K562 (cell line): ENCODE measurements at regions of chr1 and their contacts with region 1.

Region 1: DNA sequence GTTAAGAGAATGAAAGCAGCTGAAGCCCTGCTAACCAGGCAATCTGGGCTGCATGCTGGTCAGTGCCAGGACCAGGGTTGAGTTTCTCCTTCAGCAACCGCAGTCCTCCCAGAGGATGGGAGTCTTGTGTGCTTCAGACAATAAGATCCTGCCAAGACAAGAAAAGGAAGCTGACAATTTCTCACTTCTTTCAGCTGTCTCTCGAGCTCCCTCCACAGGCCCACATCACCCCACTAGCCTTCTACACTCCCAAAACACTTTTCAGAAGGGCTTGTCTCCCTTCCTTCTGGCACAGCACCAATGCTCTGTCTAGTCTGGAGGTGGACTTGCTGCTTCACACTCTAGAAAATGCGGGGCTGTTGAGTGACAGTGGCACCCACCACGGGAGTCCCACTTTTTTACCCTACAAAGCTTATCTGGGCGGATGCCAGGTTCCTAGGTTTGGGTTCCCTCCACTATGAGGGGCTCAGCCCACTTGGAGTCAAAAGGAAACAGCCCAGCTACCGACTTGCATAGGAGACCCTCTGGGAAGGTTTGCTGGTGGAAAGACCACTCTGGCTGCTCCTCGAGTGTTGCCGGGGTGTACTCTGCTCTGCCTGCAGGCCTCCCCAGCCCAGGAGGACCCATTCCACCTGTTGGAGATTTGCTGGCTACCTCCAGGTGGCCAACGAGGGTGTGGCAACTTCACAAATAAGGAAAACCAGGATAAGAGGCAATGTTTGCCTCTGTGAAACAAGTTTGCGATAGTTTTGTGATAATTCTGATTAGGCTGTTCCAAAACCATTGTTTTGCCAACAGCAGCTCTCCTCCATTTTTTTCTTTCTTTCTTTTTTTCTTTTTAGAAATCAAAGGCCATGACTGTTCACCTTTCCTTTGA is 68.9 kb downstream of the TENT5C start:
- DNase-seq: peak; percentile 55 to 81 (median 69)
- ATAC-seq: peak; percentile 83
- H3K4me3 ChIP-seq: no peak overlapping the region
- H3K27ac ChIP-seq: no peak overlapping the region
- H3K4me1 ChIP-seq: peaks cover 10 to 18% of the 10 kb centered on the region in 2 experiments
- H3K27me3 ChIP-seq: no peaks in the 10 kb centered on the region
- CTCF ChIP-seq: peak; percentile 81 to 93 (median 85)
- EP300 ChIP-seq: no peak
- POLR2A ChIP-seq: no peak
- RAD21 ChIP-seq: peak; percentile 88 to 95

Region 2: DNA sequence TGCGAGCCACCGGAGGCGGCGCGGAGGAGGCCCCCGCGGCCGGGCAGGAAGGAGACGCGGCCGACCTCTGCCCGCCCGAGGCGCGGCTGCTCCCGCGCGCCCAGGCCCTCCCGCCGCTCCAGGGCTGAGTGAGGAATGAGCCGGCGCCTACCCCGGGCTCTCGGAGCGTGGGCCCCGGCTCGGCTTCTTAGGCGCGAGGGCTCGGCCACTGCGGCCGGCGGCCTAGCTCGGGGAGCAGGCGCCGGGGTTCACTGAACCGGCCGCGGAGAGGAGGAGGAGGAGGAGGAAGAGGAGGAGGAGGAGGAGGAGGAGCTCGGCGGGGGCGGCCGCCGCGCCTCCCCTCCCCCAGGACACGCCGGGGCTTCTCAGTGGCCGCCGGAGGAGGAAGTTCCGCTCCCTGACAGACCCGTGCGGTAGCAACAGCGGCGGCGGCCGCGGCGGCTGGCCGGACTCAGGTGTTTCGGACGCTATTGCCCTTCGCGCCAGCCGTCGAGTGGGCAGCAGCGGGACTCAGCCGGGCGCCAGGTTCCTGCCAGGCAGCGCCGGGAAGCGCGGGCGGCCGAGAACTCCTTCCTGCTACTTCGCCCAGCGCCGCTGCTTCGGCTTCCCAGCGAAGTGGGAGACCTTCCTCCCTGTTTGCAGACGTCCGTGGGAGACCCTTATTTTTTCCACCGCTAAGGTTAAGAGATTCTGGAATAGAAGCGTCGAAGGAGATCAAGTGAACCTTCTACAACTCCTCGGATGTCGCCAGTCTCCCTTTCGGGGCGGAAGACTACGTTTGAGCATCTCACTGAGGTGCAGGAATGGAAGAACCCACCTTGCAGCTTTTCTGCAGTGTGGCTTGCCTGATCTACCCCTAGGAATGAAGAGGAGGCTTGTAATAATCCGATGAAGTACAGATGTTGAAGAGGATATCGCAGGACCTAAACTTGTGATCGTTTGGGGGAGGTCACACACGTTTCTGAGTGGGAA is 307.4 kb before region 1 on chr1 and contains the start of gene MAN1A2:
- CTCF ChIA-PET with region 1: no interaction called
- POLR2A ChIA-PET with region 1: no interaction called
- in situ Hi-C with region 1: no loop called
- intact Hi-C with region 1: loop called (anchors 10 kb)
- DNase-seq: peak; percentile 82 to 93 (median 86)
- ATAC-seq: peak; percentile 77
- H3K4me3 ChIP-seq: peak within 1 kb of the TSS; percentile 75
- H3K27ac ChIP-seq: peak within 1 kb of the TSS; percentile 94
- H3K4me1 ChIP-seq: peaks cover 8 to 27% of the 10 kb centered on the region in 2 experiments; a peak in 4 of 5 replicates
- H3K27me3 ChIP-seq: no peaks in the 10 kb centered on the region
- CTCF ChIP-seq: no peak
- EP300 ChIP-seq: peak; percentile 26; the same call in 1 of the 2 replicates
- POLR2A ChIP-seq: peak; percentile 73
- RAD21 ChIP-seq: no peak
- polyA plus RNA-seq, gene MAN1A2: 4.2 to 4.6 TPM

Region 3: GRCh38 chr1:117534995-117535467 is 139.7 kb before region 1 on chr1:
- CTCF ChIA-PET with region 1: interaction called, 6 read pairs
- POLR2A ChIA-PET with region 1: interaction called, 3 read pairs
- in situ Hi-C with region 1: loop called (anchors 5 kb)
- intact Hi-C with region 1: loop called (anchors 1 kb)
- DNase-seq: peak; percentile 75 to 84 (median 80)
- ATAC-seq: peak; percentile 95
- H3K4me3 ChIP-seq: no peak overlapping the region
- H3K27ac ChIP-seq: no peak overlapping the region
- H3K4me1 ChIP-seq: 0 out of 5 replicates have a peak, but pooled peaks cover 0 to 4% of the 10 kb centered on the region in 2 experiments
- H3K27me3 ChIP-seq: no peaks in the 10 kb centered on the region
- CTCF ChIP-seq: peak; percentile 80 to 88 (median 88)
- EP300 ChIP-seq: no peak
- POLR2A ChIP-seq: no peak
- RAD21 ChIP-seq: peak; percentile 82 to 94

Region 4: DNA sequence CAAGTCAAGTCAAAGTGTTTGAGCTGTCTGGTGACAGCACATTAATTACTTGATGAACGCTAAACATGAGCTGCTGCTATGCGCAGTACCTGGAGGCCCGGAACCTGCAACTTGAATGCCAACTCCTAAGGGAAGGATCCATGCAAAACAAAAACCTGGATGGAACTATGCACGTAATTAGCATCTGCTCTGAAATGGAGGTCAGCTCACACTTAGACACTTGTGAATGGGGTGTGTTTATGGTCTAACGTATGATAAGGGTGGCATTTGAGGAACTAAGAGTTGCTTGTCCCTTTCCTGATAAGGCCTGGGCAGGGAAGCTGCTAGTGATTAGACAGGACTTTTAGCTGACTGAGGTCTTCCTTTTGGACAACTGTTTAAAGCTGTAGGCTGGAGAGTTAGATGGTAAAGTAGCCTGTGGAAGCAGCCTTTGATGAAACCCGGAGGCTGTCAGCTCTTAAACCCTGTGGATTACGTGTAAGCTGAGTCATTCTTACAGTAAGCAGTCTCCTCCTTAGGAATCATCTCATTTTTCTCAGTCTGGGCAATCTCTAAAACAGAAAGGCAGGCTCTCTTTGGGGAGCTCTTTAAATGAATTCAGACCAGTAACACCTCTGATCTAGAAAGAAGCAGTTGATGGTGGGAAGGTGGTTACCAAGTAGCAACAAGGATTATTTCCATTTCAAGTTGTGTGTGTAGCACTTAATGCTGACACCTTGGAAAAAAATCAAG is 62.1 kb before region 1 on chr1:
- CTCF ChIA-PET with region 1: no interaction called
- POLR2A ChIA-PET with region 1: interaction called, 15 read pairs
- in situ Hi-C with region 1: no loop called
- intact Hi-C with region 1: loop called (anchors 2 kb)
- DNase-seq: peak; percentile 69 to 96 (median 80)
- ATAC-seq: peak; percentile 71
- H3K4me3 ChIP-seq: peak overlapping the region; percentile 9; the same call in 1 of the 2 replicates
- H3K27ac ChIP-seq: peak overlapping the region; percentile 77
- H3K4me1 ChIP-seq: peaks cover 53 to 96% of the 10 kb centered on the region in 2 experiments
- H3K27me3 ChIP-seq: no peaks in the 10 kb centered on the region
- CTCF ChIP-seq: no peak
- EP300 ChIP-seq: peak; percentile 98
- POLR2A ChIP-seq: no peak
- RAD21 ChIP-seq: peak in 1 of 2 experiments; percentile 1; a peak in 1 of 4 replicates

Region 5: GRCh38 chr1:117654493-117655219 is 20.1 kb before region 1 on chr1:
- CTCF ChIA-PET with region 1: no interaction called
- POLR2A ChIA-PET with region 1: interaction called, 6 read pairs
- in situ Hi-C with region 1: no loop called
- intact Hi-C with region 1: loop called (anchors 2 kb)
- DNase-seq: no peak
- ATAC-seq: peak; percentile 12
- H3K4me3 ChIP-seq: no peak overlapping the region
- H3K27ac ChIP-seq: peak overlapping the region; percentile 4; the same call in 1 of the 3 replicates
- H3K4me1 ChIP-seq: peaks cover 46 to 63% of the 10 kb centered on the region in 2 experiments
- H3K27me3 ChIP-seq: no peaks in the 10 kb centered on the region
- CTCF ChIP-seq: no peak
- EP300 ChIP-seq: no peak
- POLR2A ChIP-seq: no peak
- RAD21 ChIP-seq: no peak